Sciatic nerve (tissue), 2 donors: ENCODE measurements at regions of chr5 and their contacts with region 1.

Region 1: GRCh38 chr5:127809533-127809932 is 106.3 kb downstream of the CCDC192 start:
- DNase-seq: no peak
- ATAC-seq: no peak

Region 2: GRCh38 chr5:127723572-127723971 is 86.0 kb before region 1 on chr5:
- intact Hi-C with region 1: no loop called
- DNase-seq: peak; percentile 65
- ATAC-seq: peak; percentile 95

Region 3: DNA sequence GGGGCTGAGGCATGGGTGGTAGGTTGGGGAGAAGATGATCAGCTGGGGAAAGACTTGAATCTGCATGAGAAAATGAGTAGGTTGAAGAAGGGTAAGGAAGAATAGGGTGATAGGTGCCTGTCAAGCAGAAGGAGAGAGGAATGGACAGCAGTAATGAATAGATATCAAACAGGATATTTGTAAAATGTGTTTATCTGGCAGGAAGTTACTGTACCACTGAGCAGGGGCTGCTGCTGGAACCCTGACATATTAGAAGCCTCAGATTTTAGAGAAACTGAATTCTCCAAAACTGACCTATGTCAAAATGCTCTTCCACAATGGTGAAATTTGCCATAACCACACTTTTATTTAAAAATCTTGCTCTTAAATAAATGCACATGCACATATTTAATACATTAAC is 65.3 kb before region 1 on chr5:
- intact Hi-C with region 1: loop called (anchors 2 kb)
- DNase-seq: no peak
- ATAC-seq: no peak